A549 (cell line): ENCODE measurements at regions of chr20 and their contacts with region 1.

Region 1: DNA sequence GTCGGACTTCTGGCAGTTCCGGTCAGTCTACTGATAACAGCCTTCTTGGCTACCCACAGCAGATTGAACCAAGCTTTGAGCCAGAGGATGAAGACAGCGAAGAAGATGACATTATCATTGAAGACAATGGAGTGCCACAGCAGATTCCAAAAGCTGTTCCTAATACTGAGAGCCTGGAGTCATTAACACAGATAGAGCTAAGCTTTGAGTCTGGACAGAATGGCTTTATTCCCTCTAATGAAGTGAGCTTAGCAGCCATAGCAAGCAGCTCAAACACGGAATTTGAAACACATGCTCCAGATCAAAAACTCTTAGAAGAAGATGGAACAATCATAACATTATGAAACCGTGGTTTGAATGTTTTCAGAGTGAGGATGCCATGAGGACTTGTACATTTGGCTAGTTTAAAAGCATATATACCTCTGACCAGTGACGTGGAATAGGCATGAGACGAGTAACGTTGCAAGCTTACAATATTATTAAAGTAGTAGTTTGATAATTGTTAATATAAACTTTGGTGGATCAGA is 18.8 kb downstream of the PARD6B start:
- DNase-seq: no peak
- ATAC-seq: no peak
- H3K4me3 ChIP-seq: no peak overlapping the region
- H3K27ac ChIP-seq: peak overlapping the region in 1 of 2 experiments; percentile 36; a peak in 2 of 6 replicates
- H3K4me1 ChIP-seq: peaks cover 53% of the 10 kb centered on the region
- CTCF ChIP-seq: no peak
- EP300 ChIP-seq: no peak
- POLR2A ChIP-seq: no peak
- RAD21 ChIP-seq: no peak

Region 2: GRCh38 chr20:50663095-50663850 is 86.9 kb before region 1 on chr20:
- CTCF ChIA-PET with region 1: interaction called, 32 read pairs
- POLR2A ChIA-PET with region 1: no interaction called
- DNase-seq: peak in 1 of 2 experiments; percentile 79
- ATAC-seq: peak; percentile 81 to 86
- H3K4me3 ChIP-seq: no peak overlapping the region
- H3K27ac ChIP-seq: peak overlapping the region; percentile 56 to 72; a peak in 5 of 6 replicates
- H3K4me1 ChIP-seq: peaks cover 42% of the 10 kb centered on the region
- CTCF ChIP-seq: peak; percentile 65
- EP300 ChIP-seq: no peak
- POLR2A ChIP-seq: no peak
- RAD21 ChIP-seq: peak; percentile 82 to 86

Region 3: DNA sequence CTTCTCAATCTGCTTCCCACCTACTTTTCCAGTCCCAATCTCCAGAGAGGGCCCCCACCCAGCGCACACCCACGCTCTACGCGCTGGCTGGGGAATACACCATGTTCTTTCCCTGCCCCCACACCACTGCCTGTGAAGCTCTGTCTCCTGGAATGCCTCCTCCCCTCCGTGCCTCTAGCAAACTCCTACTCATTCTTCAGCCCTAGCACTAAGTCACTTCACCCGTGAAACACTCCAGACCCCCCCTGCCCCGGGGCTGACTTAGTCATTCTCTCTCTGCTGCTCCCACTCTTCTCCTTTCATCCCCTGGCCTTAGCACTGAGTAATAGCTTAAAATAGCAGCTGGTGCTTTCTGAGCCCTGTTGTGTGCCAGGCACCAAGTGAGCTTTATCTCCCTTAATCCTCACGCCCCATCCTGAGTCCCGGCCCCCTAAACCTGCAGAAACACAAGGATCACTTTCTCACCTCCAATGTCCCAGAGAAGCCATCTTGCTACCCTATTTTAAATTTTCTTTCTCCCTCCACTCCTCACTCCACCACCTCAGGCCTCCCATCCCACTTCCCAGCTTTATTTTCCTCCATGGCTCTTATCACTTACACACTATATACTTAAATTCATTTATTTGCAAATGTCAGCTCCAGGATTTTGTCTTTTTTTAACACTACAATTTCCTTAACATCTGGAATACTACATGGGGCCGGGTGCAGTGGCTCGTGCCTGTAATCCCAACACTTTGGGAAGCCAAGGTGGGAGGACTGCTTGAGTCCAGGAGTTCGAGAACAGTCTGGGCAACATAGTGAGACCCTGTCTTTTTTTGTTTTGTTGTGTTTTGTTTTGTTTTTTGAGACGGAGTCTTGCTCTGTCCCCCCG is 25.1 kb before region 1 on chr20:
- CTCF ChIA-PET with region 1: interaction called, 46 read pairs
- POLR2A ChIA-PET with region 1: interaction called, 4 read pairs
- DNase-seq: peak; percentile 73 to 86
- ATAC-seq: peak; percentile 89
- H3K4me3 ChIP-seq: no peak overlapping the region
- H3K27ac ChIP-seq: peak overlapping the region; percentile 89 to 96
- H3K4me1 ChIP-seq: peaks cover 65% of the 10 kb centered on the region
- CTCF ChIP-seq: no peak
- EP300 ChIP-seq: peak in 1 of 2 experiments; percentile 74; a peak in 1 of 5 replicates
- POLR2A ChIP-seq: no peak
- RAD21 ChIP-seq: peak; percentile 12 to 28; a peak in 1 of 5 replicates

Region 4: GRCh38 chr20:50731055-50731871 is 18.9 kb before region 1 on chr20 and contains the start of gene PARD6B:
- CTCF ChIA-PET with region 1: interaction called, 46 read pairs
- POLR2A ChIA-PET with region 1: interaction called, 4 read pairs
- DNase-seq: peak; percentile 96 to 100
- ATAC-seq: peak; percentile 76 to 86
- H3K4me3 ChIP-seq: peak within 1 kb of the TSS; percentile 90
- H3K27ac ChIP-seq: peak within 1 kb of the TSS; percentile 96
- H3K4me1 ChIP-seq: peaks cover 68% of the 10 kb centered on the region
- CTCF ChIP-seq: no peak
- EP300 ChIP-seq: no peak
- POLR2A ChIP-seq: peak; percentile 74
- RAD21 ChIP-seq: 0 out of 5 replicates have a peak, but pooled peaks of 1 of the 2 experiments have one; percentile 11
- polyA plus RNA-seq, gene PARD6B: 6.2 and 6.4 TPM in 2 replicates

Region 5: DNA sequence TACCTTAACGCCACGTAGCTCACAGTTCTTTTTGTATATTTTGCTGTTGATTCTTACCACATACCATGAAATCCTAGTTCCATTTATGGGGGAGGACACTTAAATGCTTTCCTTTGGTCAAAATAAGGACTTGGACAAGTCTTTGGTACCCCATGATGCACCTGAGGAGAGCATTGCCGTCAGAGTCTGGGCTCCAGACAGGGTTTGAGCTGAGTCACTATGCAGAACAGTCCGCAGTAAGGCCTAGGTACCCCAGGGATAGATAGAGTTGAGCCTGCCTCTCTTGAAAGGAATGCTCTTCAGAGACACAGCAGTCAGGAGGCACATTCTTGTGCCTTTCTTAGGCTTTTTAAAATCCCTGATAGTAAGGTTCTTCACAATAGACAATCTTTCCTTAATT is 12.9 kb before region 1 on chr20:
- CTCF ChIA-PET with region 1: interaction called, 46 read pairs
- POLR2A ChIA-PET with region 1: no interaction called
- DNase-seq: peak in 1 of 2 experiments; percentile 62
- ATAC-seq: peak; percentile 65 to 78; a peak in 5 of 6 replicates
- H3K4me3 ChIP-seq: no peak overlapping the region
- H3K27ac ChIP-seq: peak overlapping the region; percentile 44 to 59
- H3K4me1 ChIP-seq: peaks cover 89% of the 10 kb centered on the region
- CTCF ChIP-seq: no peak
- EP300 ChIP-seq: no peak
- POLR2A ChIP-seq: no peak
- RAD21 ChIP-seq: no peak

Region 6: DNA sequence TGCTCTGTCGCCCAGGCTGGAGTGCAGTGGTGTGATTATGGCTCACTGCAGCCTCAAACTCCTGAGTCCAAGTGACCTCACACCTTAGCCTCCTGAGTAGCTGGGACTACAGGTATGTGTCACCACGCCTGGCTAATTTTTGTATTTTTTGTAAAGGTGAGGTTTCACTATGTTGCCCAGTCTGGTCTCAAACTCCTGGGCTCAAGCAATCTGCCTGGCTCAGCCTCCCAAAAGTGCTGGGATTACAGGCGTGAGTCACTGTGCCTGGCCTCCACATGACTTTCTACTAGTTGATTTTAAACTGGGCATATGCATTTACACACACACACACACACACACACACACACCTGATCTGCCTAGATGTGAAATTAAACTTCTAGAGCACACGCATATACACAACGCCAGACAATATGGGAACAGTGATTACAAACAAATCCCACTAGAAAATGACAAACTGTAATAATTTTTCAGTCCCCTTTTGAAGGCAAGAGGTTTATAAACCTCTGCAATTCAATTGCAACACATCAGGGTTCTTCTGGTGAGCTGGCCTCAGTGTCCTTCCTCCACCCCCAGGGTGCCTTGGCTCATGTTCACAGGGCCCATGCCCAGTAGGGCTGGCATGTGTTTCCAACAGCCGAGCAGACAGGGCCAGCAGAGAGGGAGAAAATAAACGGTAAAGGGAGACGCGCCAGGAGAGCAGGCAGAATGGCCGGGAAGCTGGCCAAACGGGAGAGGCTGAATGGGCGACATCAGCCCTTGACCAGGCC is 12.4 kb after region 1 on chr20:
- CTCF ChIA-PET with region 1: interaction called, 36 read pairs
- POLR2A ChIA-PET with region 1: interaction called, 6 read pairs
- DNase-seq: peak; percentile 51 to 91
- ATAC-seq: peak; percentile 61 to 72
- H3K4me3 ChIP-seq: 0 out of 3 replicates have a peak overlapping the region, but pooled peaks have one; percentile 4
- H3K27ac ChIP-seq: peak overlapping the region; percentile 96 to 98
- H3K4me1 ChIP-seq: peaks cover 66% of the 10 kb centered on the region
- CTCF ChIP-seq: no peak
- EP300 ChIP-seq: peak; percentile 40 to 85; a peak in 3 of 5 replicates
- POLR2A ChIP-seq: no peak
- RAD21 ChIP-seq: 0 out of 5 replicates have a peak, but pooled peaks have one; percentile 5 to 22